ENCODE measurements at regions of chr11 and their contacts with region 1.

Region 1: DNA sequence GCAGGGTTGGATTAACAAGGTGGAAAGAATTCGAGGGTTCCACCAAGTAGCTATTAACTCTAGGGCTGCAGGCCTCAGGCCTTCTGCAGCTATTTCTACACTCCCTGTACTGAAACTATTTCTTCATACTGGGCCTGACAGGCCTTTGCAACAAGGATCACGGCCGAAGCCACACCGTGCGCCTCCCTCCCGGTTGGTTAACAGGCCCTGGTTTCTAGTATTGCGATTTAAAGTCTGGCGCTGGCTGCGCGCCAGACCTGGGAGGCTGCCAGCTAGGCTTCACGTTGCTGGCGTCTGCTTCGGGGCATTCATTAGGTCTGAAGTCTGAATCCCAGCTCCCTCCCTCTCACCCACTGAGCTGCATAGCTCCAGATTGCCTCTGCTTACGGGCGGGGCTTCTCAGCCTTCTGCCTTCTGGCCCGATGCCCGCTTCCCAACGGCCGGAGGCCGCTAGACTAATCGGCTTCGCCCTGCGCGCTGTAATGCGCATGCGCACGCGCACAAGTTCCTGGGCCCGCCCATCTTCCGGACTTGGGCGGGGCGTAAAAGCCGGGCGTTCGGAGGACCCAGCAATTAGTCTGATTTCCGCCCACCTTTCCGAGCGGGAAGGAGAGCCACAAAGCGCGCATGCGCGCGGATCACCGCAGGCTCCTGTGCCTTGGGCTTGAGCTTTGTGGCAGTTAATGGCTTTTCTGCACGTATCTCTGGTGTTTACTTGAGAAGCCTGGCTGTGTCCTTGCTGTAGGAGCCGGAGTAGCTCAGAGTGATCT is 1.6 kb downstream of the LDHA start:
- DNase-seq: peak; percentile 98
- H3K4me3 ChIP-seq: peak overlapping the region; percentile 85 to 97 (median 92)
- H3K27ac ChIP-seq: peak overlapping the region; percentile 96 to 99 (median 98)
- H3K4me1 ChIP-seq: peaks cover 0 to 28% (median 20%) of the 10 kb centered on the region in 4 donors
- H3K27me3 ChIP-seq: no peaks in the 10 kb centered on the region
- CTCF ChIP-seq: no peak
- EP300 ChIP-seq: peak; percentile 36
- POLR2A ChIP-seq: peak; percentile 89

Region 2: GRCh38 chr11:18321980-18322711 is 73.8 kb before region 1 on chr11 and contains the starts of genes GTF2H1 and HPS5:
- in situ Hi-C with region 1: loop called in 2 of 4 experiments (anchors 5 kb)
- intact Hi-C with region 1: loop called (anchors 10 kb)
- DNase-seq: peak; percentile 98
- H3K4me3 ChIP-seq: peak within 1 kb of the TSS; percentile 71 to 98 (median 84)
- H3K27ac ChIP-seq: peak within 1 kb of the TSS; percentile 91 to 97 (median 94)
- H3K4me1 ChIP-seq: peaks cover 19 to 51% (median 27%) of the 10 kb centered on the region in 4 donors
- H3K27me3 ChIP-seq: no peaks in the 10 kb centered on the region
- CTCF ChIP-seq: peak in 1 of 5 experiments; percentile 2
- EP300 ChIP-seq: peak; percentile 90
- POLR2A ChIP-seq: peak; percentile 97
- total RNA-seq, gene GTF2H1: 46.6 to 147 (median 60.0) TPM
- total RNA-seq, gene HPS5: 3.0 to 18.9 (median 14.2) TPM